Calu3 (cell line): ENCODE measurements at regions of chr4 and their contacts with region 1.

Region 1: GRCh38 chr4:38319456-38320342 is 344.3 kb upstream of the KLF3 start:
- DNase-seq: peak; percentile 92
- H3K4me3 Mint-ChIP-seq: no peak overlapping the region
- H3K27ac Mint-ChIP-seq: peak overlapping the region; percentile 77
- H3K4me1 Mint-ChIP-seq: peaks cover 51% of the 10 kb centered on the region
- H3K27me3 Mint-ChIP-seq: no peaks in the 10 kb centered on the region
- CTCF ChIP-seq: peak; percentile 85

Region 2: DNA sequence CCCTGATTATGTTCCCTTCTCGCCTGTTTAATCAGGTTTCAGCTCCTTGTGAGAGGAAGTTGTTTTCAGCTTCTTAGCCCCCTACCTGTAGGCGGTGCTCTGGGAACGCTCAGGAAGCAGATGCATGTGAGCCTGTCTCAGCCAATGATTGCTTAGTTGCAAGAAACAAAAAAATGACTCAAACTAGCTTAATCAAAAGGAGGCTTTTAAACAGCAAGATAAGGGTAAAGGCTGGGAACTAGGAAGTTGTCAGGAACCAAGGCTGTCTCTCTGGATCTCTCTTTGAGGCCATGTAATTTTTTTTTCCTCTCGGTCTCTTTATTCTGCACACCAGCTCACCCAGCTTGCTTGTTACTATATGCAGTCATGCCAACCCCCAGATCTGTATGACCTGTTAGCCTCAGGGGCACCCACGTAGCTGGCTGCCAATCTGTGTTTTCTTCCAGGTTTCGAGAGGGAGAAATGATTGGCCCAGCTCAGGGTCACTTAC is 250.4 kb before region 1 on chr4:
- CTCF ChIA-PET with region 1: interaction called, 9 read pairs
- intact Hi-C with region 1: loop called (anchors 5 kb)
- DNase-seq: peak; percentile 64
- H3K4me3 Mint-ChIP-seq: no peak overlapping the region
- H3K27ac Mint-ChIP-seq: no peak overlapping the region
- H3K4me1 Mint-ChIP-seq: peaks cover 8% of the 10 kb centered on the region
- H3K27me3 Mint-ChIP-seq: no peaks in the 10 kb centered on the region
- CTCF ChIP-seq: peak; percentile 28

Region 3: GRCh38 chr4:38190717-38191178 is 129.0 kb before region 1 on chr4:
- CTCF ChIA-PET with region 1: no interaction called
- intact Hi-C with region 1: loop called (anchors 2 kb)
- DNase-seq: no peak
- H3K4me3 Mint-ChIP-seq: no peak overlapping the region
- H3K27ac Mint-ChIP-seq: no peak overlapping the region
- H3K4me1 Mint-ChIP-seq: peaks cover 23% of the 10 kb centered on the region
- H3K27me3 Mint-ChIP-seq: no peaks in the 10 kb centered on the region
- CTCF ChIP-seq: no peak

Region 4: GRCh38 chr4:38230121-38230801 is 89.4 kb before region 1 on chr4:
- CTCF ChIA-PET with region 1: no interaction called
- intact Hi-C with region 1: loop called (anchors 2 kb)
- DNase-seq: peak; percentile 46
- H3K4me3 Mint-ChIP-seq: peak overlapping the region; percentile 32
- H3K27ac Mint-ChIP-seq: peak overlapping the region; percentile 79
- H3K4me1 Mint-ChIP-seq: peaks cover 40% of the 10 kb centered on the region
- H3K27me3 Mint-ChIP-seq: no peaks in the 10 kb centered on the region
- CTCF ChIP-seq: no peak

Region 5: DNA sequence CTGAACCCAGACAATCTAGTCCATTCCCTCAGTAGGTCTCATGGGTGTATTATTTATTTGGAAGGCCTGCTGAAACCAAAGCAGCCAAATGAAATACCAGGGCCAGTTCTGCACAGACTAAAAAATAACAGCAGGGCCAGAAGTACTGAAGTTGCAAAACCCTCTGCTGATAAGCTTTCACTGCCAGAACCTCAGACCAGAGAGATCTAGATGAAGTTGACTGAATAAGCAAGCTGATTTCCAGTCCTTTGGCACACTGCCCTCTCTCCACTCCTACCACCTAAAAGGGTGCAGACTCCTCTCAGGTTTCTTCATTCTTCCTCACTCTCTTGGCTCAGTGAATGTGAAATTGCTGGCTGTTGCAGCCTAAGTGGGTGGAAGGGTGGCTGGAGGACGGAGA is 67.6 kb after region 1 on chr4:
- CTCF ChIA-PET with region 1: interaction called, 4 read pairs
- intact Hi-C with region 1: loop called (anchors 1 kb)
- DNase-seq: peak; percentile 49
- H3K4me3 Mint-ChIP-seq: no peak overlapping the region
- H3K27ac Mint-ChIP-seq: no peak overlapping the region
- H3K4me1 Mint-ChIP-seq: peaks cover 9% of the 10 kb centered on the region
- H3K27me3 Mint-ChIP-seq: no peaks in the 10 kb centered on the region
- CTCF ChIP-seq: no peak

Region 6: DNA sequence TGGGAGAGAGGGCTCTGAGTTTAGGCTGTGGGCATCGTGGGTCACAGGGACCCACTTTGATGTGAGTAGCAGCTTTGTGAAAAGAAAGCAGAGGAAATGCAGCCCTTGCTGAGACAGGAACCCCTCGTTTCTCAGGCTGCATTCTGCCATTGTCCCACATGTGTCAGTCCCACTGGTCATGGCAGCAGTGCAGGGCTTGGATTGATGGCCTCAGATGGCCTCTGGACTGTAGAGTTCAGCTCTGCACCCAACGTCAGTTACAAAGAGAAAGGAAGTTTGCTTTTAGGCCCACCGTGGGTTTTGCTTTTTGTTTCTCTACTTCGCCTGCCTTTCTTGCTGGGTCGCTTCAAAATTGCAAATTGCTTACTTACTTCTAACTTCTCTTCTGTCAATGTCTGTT is 96.0 kb after region 1 on chr4:
- CTCF ChIA-PET with region 1: no interaction called
- intact Hi-C with region 1: no loop called
- DNase-seq: no peak
- H3K4me3 Mint-ChIP-seq: no peak overlapping the region
- H3K27ac Mint-ChIP-seq: no peak overlapping the region
- H3K4me1 Mint-ChIP-seq: peaks cover 23% of the 10 kb centered on the region
- H3K27me3 Mint-ChIP-seq: no peaks in the 10 kb centered on the region
- CTCF ChIP-seq: no peak

Region 7: DNA sequence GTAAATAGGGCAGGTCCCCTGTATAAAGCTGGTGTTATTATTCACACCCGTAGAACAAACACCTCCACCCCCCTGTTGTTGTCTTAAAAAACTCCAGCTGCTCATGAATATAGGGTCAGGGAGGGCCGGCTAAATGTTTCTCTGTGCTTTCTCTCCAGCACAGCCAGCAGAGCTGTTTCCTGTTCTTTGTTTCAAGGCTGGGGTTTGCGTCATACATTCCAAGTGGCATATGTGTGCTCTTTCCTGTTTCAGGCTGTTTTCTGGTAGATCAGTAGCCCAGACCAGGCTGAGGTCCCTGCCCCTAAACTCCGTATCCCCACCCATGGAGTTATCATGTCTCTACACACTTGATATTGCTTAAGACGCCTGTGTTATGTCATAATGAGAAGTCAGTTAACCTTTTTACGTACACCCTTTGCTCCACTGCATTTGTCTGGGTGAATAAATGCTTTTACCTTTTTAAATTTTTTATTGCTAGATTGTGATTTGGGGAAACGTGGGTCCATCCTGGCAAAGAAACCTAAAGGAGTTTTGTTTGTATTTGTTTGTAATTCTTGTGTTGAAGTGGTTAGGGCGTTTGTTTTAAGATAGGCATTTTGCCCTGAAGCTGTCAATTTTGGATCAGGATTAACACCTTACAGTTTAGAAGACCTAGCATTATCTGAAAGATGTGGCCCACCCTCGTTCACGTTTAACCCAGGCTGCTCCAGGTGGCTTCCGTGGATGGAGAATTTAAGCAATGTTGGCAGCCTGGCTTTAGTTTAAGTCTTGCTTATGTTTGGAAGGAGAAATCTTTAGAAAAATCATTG is 347.6 kb after region 1 on chr4:
- CTCF ChIA-PET with region 1: interaction called, 4 read pairs
- intact Hi-C with region 1: loop called (anchors 2 kb)
- DNase-seq: peak; percentile 79
- H3K4me3 Mint-ChIP-seq: peak overlapping the region; percentile 89
- H3K27ac Mint-ChIP-seq: peak overlapping the region; percentile 99
- H3K4me1 Mint-ChIP-seq: peaks cover 26% of the 10 kb centered on the region
- H3K27me3 Mint-ChIP-seq: no peaks in the 10 kb centered on the region
- CTCF ChIP-seq: no peak